HCT116 (cell line): ENCODE measurements at regions of chr12 and their contacts with region 1.

Region 1: GRCh38 chr12:54005853-54006686 is 2.7 kb upstream of the HOXC8 start:
- DNase-seq: no peak
- ATAC-seq: peak; percentile 94
- H3K4me3 ChIP-seq: no peak overlapping the region
- H3K27ac ChIP-seq: no peak overlapping the region
- H3K4me1 ChIP-seq: peaks cover 2 to 12% of the 10 kb centered on the region in 2 experiments
- H3K27me3 ChIP-seq: no peaks in the 10 kb centered on the region
- CTCF ChIP-seq: peak; percentile 80 to 97 (median 93)
- POLR2A ChIP-seq: no peak
- RAD21 ChIP-seq: peak; percentile 98

Region 2: GRCh38 chr12:53961025-53961761 is 44.9 kb before region 1 on chr12:
- CTCF ChIA-PET with region 1: no interaction called
- POLR2A ChIA-PET with region 1: no interaction called
- RAD21 ChIA-PET with region 1: no interaction called
- intact Hi-C with region 1: no loop called
- DNase-seq: no peak
- ATAC-seq: no peak
- H3K4me3 ChIP-seq: no peak overlapping the region
- H3K27ac ChIP-seq: no peak overlapping the region
- H3K4me1 ChIP-seq: no peaks in the 10 kb centered on the region
- H3K27me3 ChIP-seq: no peaks in the 10 kb centered on the region
- CTCF ChIP-seq: no peak; a peak in 1 of 6 replicates
- POLR2A ChIP-seq: no peak
- RAD21 ChIP-seq: no peak

Region 3: GRCh38 chr12:54017878-54018467 is 11.9 kb after region 1 on chr12:
- CTCF ChIA-PET with region 1: interaction called, 29 read pairs
- POLR2A ChIA-PET with region 1: interaction called, 23 read pairs
- RAD21 ChIA-PET with region 1: interaction called, 5 to 9 read pairs
- intact Hi-C with region 1: no loop called
- DNase-seq: peak; percentile 84
- ATAC-seq: peak; percentile 80
- H3K4me3 ChIP-seq: peak overlapping the region; percentile 76 to 88
- H3K27ac ChIP-seq: peak overlapping the region; percentile 94
- H3K4me1 ChIP-seq: peaks cover 24 to 44% of the 10 kb centered on the region in 2 experiments
- H3K27me3 ChIP-seq: no peaks in the 10 kb centered on the region
- CTCF ChIP-seq: no peak
- POLR2A ChIP-seq: peak; percentile 56
- RAD21 ChIP-seq: no peak

Region 4: DNA sequence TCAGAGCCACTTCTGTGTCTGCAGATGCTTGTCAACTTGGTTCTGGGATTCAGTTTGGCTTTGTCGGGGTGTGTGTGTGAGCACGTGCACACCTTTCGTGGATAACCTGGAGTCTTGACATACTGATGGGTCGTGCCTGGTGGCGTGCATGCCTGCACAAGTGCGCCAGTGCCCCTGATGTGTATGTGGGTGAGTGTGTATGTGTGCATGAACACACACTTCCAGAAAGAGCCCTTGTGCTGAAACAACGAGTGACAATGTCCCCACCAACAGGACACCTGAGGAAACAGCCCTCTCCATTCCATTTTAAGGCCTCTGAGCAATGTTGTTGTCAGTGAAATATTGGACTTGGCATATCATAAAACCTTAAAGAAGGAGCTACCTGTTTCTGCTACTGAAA is 128.8 kb after region 1 on chr12:
- CTCF ChIA-PET with region 1: interaction called, 12 read pairs
- POLR2A ChIA-PET with region 1: no interaction called
- RAD21 ChIA-PET with region 1: no interaction called
- intact Hi-C with region 1: no loop called
- DNase-seq: no peak
- ATAC-seq: peak; percentile 59; the same call in 1 of the 2 replicates
- H3K4me3 ChIP-seq: no peak overlapping the region
- H3K27ac ChIP-seq: no peak overlapping the region
- H3K4me1 ChIP-seq: peaks cover 4 to 5% of the 10 kb centered on the region in 2 experiments; a peak in 1 of 4 replicates
- H3K27me3 ChIP-seq: no peaks in the 10 kb centered on the region; the same call in 1 of the 2 replicates
- CTCF ChIP-seq: peak; percentile 26 to 37 (median 28); a peak in 5 of 6 replicates
- POLR2A ChIP-seq: no peak
- RAD21 ChIP-seq: peak; percentile 49

Region 5: DNA sequence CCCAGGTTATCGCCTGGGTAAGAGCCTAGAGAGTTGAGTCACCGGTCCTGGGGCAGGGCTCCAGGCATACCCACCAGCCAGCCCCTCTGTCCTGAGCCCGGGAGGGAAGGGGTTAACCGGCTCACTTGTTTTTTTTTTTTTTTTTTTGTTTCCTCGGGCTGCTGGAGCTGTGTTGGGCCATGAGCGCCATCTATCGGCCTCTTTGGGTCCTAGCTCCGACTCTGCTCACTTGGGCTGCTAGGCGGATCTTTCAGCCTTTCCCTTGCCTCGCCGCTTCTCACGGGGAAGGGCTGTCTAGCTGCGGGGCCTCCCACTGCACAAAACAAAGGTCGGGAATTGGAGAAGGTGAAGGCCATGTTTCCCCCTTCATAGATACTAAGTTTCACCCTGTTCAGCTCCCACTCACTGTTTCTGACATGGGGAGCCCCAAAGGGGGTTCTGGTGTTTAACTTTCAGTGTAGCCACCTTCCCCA is 185.5 kb after region 1 on chr12:
- CTCF ChIA-PET with region 1: interaction called, 21 read pairs
- POLR2A ChIA-PET with region 1: no interaction called
- RAD21 ChIA-PET with region 1: interaction called, 6 to 9 read pairs
- intact Hi-C with region 1: loop called (anchors 1 kb)
- DNase-seq: peak; percentile 77
- ATAC-seq: peak; percentile 71
- H3K4me3 ChIP-seq: no peak overlapping the region
- H3K27ac ChIP-seq: no peak overlapping the region
- H3K4me1 ChIP-seq: peaks cover 5 to 33% of the 10 kb centered on the region in 2 experiments
- H3K27me3 ChIP-seq: no peaks in the 10 kb centered on the region
- CTCF ChIP-seq: peak; percentile 80 to 92 (median 90)
- POLR2A ChIP-seq: no peak
- RAD21 ChIP-seq: peak; percentile 89

Region 6: GRCh38 chr12:54214553-54215406 is 208.7 kb after region 1 on chr12:
- CTCF ChIA-PET with region 1: interaction called, 14 read pairs
- POLR2A ChIA-PET with region 1: no interaction called
- RAD21 ChIA-PET with region 1: no interaction called
- intact Hi-C with region 1: no loop called
- DNase-seq: peak; percentile 85
- ATAC-seq: peak; percentile 93
- H3K4me3 ChIP-seq: peak overlapping the region; percentile 15 to 30; a peak in 3 of 4 replicates
- H3K27ac ChIP-seq: no peak overlapping the region
- H3K4me1 ChIP-seq: peaks cover 3 to 26% of the 10 kb centered on the region in 2 experiments
- H3K27me3 ChIP-seq: no peaks in the 10 kb centered on the region
- CTCF ChIP-seq: peak; percentile 98 to 100 (median 99)
- POLR2A ChIP-seq: no peak
- RAD21 ChIP-seq: peak; percentile 70